ENCODE measurements at regions of chr14 and their contacts with region 1.

Region 1: GRCh38 chr14:88792572-88793258 is at the start of gene EML5:
- DNase-seq: peak; percentile 86
- H3K4me3 Mint-ChIP-seq: peak within 1 kb of the TSS; percentile 88
- H3K27ac Mint-ChIP-seq: peak within 1 kb of the TSS; percentile 71
- H3K4me1 Mint-ChIP-seq: peaks cover 18% of the 10 kb centered on the region
- H3K27me3 Mint-ChIP-seq: no peaks in the 10 kb centered on the region
- total RNA-seq, gene EML5: 3.7 to 3.8 TPM

Region 2: GRCh38 chr14:88492272-88493089 is 300.2 kb before region 1 on chr14:
- CTCF ChIA-PET with region 1: no interaction called
- intact Hi-C with region 1: loop called (anchors 1 kb)
- DNase-seq: peak; percentile 77
- H3K4me3 Mint-ChIP-seq: no peak overlapping the region
- H3K27ac Mint-ChIP-seq: no peak overlapping the region
- H3K4me1 Mint-ChIP-seq: no peaks in the 10 kb centered on the region
- H3K27me3 Mint-ChIP-seq: no peaks in the 10 kb centered on the region

Region 3: GRCh38 chr14:88599761-88600439 is 192.8 kb before region 1 on chr14:
- CTCF ChIA-PET with region 1: no interaction called
- intact Hi-C with region 1: loop called (anchors 2 kb)
- DNase-seq: peak; percentile 58
- H3K4me3 Mint-ChIP-seq: peak overlapping the region; percentile 6
- H3K27ac Mint-ChIP-seq: peak overlapping the region; percentile 79
- H3K4me1 Mint-ChIP-seq: peaks cover 21% of the 10 kb centered on the region
- H3K27me3 Mint-ChIP-seq: no peaks in the 10 kb centered on the region

Region 4: DNA sequence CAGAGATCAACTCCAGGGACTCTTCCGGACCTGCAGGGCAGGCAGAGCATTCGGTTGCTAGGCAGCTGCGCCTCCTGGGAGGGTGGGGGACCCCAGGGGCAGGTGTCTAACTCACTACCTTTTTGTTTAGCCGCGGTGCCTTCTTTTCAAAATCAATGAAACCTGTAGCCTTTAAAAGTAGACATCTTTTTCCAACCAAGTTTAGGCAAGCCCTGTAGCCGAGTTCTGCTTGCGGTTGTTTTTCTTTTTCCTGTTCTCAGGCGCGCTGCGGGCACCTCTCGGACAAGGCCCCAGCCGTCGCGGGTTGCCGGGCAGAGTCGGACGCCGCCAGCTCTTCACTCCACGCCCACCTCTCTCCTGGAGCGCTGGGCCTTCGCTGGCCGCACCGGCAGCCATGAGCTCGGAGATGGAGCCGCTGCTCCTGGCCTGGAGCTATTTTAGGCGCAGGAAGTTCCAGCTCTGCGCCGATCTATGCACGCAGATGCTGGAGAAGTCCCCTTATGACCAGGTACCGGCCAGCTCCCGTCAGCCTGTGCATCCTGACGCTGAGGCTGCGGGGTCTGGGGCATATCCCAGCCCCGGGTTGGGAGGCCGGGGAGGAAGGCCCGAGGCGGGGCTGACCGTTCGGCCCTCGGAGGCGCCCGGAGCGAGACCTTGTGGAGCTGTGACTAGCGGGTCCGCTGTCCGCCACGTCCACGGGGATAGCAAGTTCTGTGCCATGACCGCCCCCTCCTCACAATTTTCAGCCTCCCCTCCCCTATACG is 31.8 kb after region 1 on chr14 and contains the start of gene TTC8:
- CTCF ChIA-PET with region 1: interaction called, 4 read pairs
- intact Hi-C with region 1: loop called (anchors 1 kb)
- DNase-seq: peak; percentile 88
- H3K4me3 Mint-ChIP-seq: peak within 1 kb of the TSS; percentile 80
- H3K27ac Mint-ChIP-seq: peak within 1 kb of the TSS; percentile 92
- H3K4me1 Mint-ChIP-seq: peaks cover 9% of the 10 kb centered on the region
- H3K27me3 Mint-ChIP-seq: no peaks in the 10 kb centered on the region
- total RNA-seq, gene TTC8: 1.8 to 1.9 TPM

Region 5: DNA sequence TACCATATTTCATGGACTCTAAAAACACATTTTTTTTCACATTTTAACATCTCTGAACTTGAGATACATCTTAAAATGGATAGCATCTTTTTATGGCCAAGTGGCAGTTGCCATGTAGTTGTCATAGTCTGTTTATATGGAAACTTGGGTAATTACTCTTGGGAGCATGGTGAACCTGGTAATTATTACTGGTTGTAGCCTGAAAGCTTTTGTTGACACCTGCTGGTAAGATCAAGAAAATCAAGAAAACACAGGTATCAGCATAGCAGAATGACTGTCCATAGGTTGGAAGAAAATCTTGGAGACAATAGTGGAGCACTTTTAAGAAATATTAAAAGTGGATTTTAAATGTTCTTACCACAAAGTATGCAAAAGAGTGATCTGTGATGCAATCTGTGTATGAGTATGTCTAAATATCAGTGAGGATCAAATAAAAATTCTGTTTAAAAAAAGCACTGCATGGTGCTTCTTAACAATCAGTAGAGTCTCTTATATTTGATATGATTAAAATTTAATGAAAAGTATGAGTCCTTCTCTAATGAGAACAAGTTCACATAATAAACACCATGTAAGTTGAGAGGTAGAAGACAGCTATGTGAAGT is 75.9 kb after region 1 on chr14:
- CTCF ChIA-PET with region 1: no interaction called
- intact Hi-C with region 1: no loop called
- DNase-seq: no peak
- H3K4me3 Mint-ChIP-seq: no peak overlapping the region
- H3K27ac Mint-ChIP-seq: no peak overlapping the region
- H3K4me1 Mint-ChIP-seq: no peaks in the 10 kb centered on the region
- H3K27me3 Mint-ChIP-seq: no peaks in the 10 kb centered on the region

Region 6: DNA sequence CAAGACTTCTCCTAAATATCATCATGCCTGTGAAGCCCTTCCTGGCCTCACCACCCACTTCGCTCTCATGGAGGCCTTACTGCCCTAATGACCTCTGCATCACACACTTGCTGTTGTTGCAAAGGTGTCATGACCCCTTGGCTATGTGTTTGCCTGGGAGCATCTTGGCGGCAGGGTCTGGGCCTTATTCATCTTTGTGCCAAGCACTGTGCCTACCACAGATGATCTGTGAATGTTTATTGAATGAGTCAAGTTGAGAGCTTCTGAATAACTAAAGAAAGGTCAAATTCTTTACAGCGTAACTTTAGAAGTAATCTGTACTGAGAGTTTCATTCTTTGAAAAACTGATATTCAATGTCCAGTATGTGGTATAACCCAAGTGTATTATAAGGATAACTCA is 145.0 kb after region 1 on chr14:
- CTCF ChIA-PET with region 1: no interaction called
- intact Hi-C with region 1: no loop called
- DNase-seq: no peak
- H3K4me3 Mint-ChIP-seq: no peak overlapping the region
- H3K27ac Mint-ChIP-seq: no peak overlapping the region
- H3K4me1 Mint-ChIP-seq: no peaks in the 10 kb centered on the region
- H3K27me3 Mint-ChIP-seq: peaks cover 11% of the 10 kb centered on the region

Region 7: DNA sequence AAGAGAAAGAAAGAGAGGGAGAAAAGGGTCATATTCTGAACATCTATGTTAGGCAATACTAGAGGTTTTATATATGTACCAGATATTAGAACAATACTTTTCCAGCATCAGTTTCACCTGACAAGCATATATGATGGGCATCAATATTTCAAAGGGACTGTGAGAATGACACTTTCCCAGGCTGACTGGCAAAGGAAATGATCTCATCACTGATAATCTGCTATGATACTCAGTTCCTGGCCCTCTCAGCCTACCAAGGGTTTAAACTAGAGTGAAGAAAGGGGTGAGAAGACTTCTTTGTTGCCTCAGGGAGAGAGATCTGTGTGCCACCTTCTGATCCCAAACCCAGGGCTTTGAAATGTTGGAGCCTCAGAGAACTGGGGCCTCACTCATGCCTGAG is 215.2 kb after region 1 on chr14:
- CTCF ChIA-PET with region 1: no interaction called
- intact Hi-C with region 1: loop called (anchors 5 kb)
- DNase-seq: peak; percentile 6
- H3K4me3 Mint-ChIP-seq: no peak overlapping the region
- H3K27ac Mint-ChIP-seq: no peak overlapping the region
- H3K4me1 Mint-ChIP-seq: peaks cover 5% of the 10 kb centered on the region
- H3K27me3 Mint-ChIP-seq: peaks cover 5% of the 10 kb centered on the region